Activated CD4-positive, alpha-beta T cell treated with anti-CD3 and anti-CD28 coated beads for 36 hours (primary cell): ENCODE measurements at regions of chr2 and their contacts with region 1.

Region 1: DNA sequence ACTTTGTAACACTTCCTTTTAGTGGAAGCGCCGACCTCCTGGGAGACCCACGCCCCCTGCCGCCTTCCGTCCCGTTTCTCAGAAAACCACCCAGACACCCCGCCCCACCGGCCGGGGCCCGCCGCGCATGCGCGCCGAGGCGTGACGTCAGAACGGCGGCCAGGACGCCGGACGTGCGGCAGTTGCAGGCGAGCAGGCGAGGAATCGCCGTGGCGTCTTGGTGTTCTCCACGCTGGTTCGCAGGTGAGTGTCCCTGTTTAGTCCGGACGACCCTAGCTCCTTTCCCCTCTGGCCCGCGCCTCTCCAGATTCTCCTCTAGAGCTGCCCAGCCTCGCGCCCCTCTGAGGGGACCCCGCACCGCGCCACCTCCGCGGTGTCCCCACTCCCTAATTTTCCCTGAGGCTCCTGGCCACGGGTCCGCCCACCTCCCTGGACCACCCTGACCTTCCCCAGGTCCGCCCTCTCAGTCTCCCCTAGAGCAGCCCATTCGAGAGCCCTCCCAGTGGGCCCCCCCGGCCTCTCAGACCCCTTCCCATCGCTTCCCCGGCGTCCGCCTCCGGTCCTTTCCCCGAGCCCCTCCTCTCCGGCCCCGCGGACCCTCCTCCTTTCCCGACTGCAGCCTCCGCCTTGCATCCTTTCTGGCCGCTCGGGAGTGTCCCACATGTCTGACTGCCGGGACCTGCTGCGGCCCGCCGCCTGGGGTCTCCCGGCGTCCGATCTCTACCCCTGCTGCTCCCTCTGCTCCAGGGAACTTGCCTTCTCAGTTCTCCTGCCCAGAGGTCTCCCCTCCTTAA is at the start of gene PLEKHB2:
- DNase-seq: peak; percentile 94
- ATAC-seq: peak; percentile 66
- H3K4me3 Mint-ChIP-seq: peak within 1 kb of the TSS; percentile 98
- H3K27ac Mint-ChIP-seq: peak within 1 kb of the TSS; percentile 99
- H3K4me1 Mint-ChIP-seq: peaks cover 43% of the 10 kb centered on the region
- H3K27me3 Mint-ChIP-seq: no peaks in the 10 kb centered on the region
- total RNA-seq, gene PLEKHB2: 39.9 to 42.4 TPM

Region 2: GRCh38 chr2:130996691-130997090 is 108.7 kb before region 1 on chr2:
- CTCF ChIA-PET with region 1: no interaction called
- POLR2A ChIA-PET with region 1: no interaction called
- intact Hi-C with region 1: no loop called
- DNase-seq: no peak
- ATAC-seq: no peak
- H3K4me3 Mint-ChIP-seq: no peak overlapping the region
- H3K27ac Mint-ChIP-seq: no peak overlapping the region
- H3K4me1 Mint-ChIP-seq: no peaks in the 10 kb centered on the region
- H3K27me3 Mint-ChIP-seq: peaks cover 9% of the 10 kb centered on the region

Region 3: DNA sequence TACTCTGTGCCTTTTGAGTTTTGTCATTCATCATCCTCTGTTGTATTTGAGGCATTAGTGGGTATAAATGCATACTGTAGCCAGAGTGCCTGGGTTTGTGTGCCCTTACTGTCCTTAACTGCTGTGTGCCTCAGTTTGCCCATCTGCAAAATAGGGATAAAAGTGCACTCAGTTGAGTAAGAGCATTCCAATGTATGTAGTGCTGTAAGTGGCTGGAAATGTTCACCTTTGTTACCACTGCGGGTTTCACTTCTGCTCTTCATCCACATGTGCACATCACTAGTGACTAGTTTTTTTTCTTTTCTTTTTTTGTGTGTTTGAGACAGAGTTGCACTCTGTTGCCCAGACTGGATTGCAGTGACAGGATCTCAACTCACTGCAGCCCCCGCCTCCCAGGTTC is 39.7 kb after region 1 on chr2:
- CTCF ChIA-PET with region 1: no interaction called
- POLR2A ChIA-PET with region 1: no interaction called
- intact Hi-C with region 1: no loop called
- DNase-seq: no peak
- ATAC-seq: no peak
- H3K4me3 Mint-ChIP-seq: no peak overlapping the region
- H3K27ac Mint-ChIP-seq: no peak overlapping the region
- H3K4me1 Mint-ChIP-seq: peaks cover 5% of the 10 kb centered on the region
- H3K27me3 Mint-ChIP-seq: no peaks in the 10 kb centered on the region

Region 4: GRCh38 chr2:131682122-131682944 is 577.0 kb after region 1 on chr2:
- CTCF ChIA-PET with region 1: no interaction called
- POLR2A ChIA-PET with region 1: no interaction called
- intact Hi-C with region 1: loop called in 1 of 2 experiments (anchors 2 kb)
- DNase-seq: peak; percentile 88
- ATAC-seq: peak; percentile 99
- H3K4me3 Mint-ChIP-seq: peak overlapping the region; percentile 82
- H3K27ac Mint-ChIP-seq: peak overlapping the region; percentile 76
- H3K4me1 Mint-ChIP-seq: peaks cover 32% of the 10 kb centered on the region
- H3K27me3 Mint-ChIP-seq: peaks cover 3% of the 10 kb centered on the region